ENCODE measurements at regions of chr11 and their contacts with region 1.

Region 1: DNA sequence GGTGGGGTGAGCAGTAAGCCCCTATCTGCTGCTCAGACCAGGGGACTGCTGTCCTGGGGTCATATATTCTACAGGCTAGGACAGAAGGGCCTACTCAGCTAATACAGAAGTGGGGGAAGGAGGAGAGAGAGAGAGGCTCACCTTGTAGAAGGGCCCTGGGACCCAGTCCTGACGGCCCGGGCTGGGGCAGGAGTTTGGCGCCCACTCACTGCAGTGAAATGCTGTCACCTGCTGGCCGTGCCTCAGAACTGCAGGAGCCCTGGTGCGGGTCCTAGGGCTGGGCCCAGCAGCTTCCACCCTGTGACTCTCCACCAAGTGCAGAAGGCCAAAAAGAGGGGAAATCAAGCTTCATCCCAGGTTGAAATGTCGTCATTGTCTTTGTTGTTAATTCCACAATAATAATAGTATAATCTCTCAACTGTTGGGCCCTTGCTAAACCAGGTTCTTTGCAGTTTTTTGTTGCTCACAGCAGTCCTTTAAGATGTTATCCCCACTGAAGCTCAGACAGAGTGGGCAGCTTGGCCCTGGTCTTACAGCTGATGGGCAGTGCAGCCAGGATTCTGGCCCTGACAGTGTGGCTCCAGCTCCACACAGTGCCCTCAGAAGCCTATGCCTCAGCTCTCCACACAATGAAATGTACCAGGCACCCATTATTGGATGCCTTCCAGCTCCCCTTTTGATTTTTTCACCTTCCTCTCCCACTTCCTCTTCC is 29.6 kb downstream of the TRIM29 start:
- DNase-seq: peak; percentile 61 to 70
- H3K4me3 ChIP-seq: no peak overlapping the region
- H3K27ac ChIP-seq: no peak overlapping the region
- H3K4me1 ChIP-seq: no peaks in the 10 kb centered on the region
- H3K27me3 ChIP-seq: peaks cover 28% of the 10 kb centered on the region
- CTCF ChIP-seq: peak; percentile 100

Region 2: DNA sequence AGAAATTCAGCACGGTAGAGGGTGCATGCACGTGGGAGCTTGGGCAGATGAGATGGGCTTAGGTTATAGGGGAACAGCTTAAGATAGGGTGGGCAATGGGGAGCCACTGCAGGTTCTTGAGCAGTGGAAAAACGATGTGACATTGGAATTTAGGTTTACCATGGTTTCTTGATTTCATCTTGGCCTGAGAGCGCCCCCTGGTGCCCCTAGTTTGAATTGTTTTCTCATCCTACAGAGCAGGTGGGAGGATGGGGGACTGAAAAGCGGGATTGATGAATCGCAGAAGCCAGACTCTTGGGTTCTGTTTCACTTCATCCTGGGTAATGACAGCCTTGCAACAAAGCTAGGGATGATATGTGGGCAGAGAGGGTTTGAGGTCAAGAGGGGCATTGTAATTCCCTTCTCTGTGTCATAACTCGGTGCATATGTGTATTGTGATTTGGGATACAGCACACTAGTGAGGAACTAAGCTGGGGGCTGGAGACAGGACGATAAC is 784.7 kb before region 1 on chr11:
- CTCF ChIA-PET with region 1: no interaction called
- POLR2A ChIA-PET with region 1: no interaction called
- intact Hi-C with region 1: no loop called
- DNase-seq: peak; percentile 59 to 71
- H3K4me3 ChIP-seq: no peak overlapping the region
- H3K27ac ChIP-seq: no peak overlapping the region
- H3K4me1 ChIP-seq: peaks cover 22% of the 10 kb centered on the region
- H3K27me3 ChIP-seq: no peaks in the 10 kb centered on the region
- CTCF ChIP-seq: peak; percentile 96

Region 3: GRCh38 chr11:119666463-119667131 is 441.7 kb before region 1 on chr11:
- CTCF ChIA-PET with region 1: no interaction called
- POLR2A ChIA-PET with region 1: no interaction called
- intact Hi-C with region 1: loop called (anchors 1 kb)
- DNase-seq: peak; percentile 71 to 83
- H3K4me3 ChIP-seq: no peak overlapping the region
- H3K27ac ChIP-seq: no peak overlapping the region
- H3K4me1 ChIP-seq: no peaks in the 10 kb centered on the region
- H3K27me3 ChIP-seq: no peaks in the 10 kb centered on the region
- CTCF ChIP-seq: peak; percentile 98

Region 4: DNA sequence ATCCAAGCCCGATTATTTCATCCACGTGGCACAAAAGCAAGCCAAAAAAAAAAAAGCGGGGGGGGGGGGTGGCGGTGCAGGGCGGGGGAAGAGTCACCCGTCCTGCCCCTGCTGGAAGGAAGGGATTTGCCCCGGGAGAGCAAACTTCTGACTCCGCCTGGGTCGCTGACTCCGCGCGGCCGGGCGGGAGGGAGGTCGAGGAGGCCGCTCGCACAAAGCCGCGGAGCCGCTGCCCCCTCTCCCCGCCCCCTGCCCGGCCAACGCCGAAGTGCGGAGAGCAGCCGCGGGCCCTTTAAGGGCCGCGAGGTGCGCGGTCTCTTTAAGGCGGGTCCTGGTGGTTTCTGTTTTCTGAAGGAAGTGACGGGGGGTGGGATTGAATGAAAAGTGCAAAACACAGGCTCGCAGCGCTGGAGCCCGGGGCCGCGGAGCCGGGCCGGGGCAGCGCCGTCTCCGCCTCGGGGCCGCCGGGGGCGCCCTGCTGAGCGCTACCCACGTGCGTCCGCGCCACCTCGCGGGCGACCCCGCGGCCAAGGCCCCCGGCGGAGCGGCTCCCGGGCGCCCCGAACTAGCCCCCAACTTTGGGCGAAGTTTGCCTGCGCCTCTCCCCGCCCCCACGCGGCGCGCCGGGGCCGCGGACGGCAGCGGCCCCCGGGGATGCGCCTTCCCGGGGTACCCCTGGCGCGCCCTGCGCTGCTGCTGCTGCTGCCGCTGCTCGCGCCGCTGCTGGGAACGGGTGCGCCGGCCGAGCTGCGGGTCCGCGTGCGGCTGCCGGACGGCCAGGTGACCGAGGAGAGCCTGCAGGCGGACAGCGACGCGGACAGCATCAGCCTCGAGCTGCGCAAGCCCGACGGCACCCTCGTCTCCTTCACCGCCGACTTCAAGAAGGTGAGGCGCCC is 102.6 kb after region 1 on chr11 and contains the start of gene OAF:
- CTCF ChIA-PET with region 1: interaction called, 15 read pairs
- POLR2A ChIA-PET with region 1: no interaction called
- intact Hi-C with region 1: no loop called
- DNase-seq: peak; percentile 77 to 85
- H3K4me3 ChIP-seq: peak within 1 kb of the TSS; percentile 99
- H3K27ac ChIP-seq: peak within 1 kb of the TSS; percentile 80
- H3K4me1 ChIP-seq: peaks cover 65% of the 10 kb centered on the region
- H3K27me3 ChIP-seq: no peaks in the 10 kb centered on the region
- CTCF ChIP-seq: peak; percentile 43; the same call in 1 of the 2 replicates
- total RNA-seq, gene OAF: 45.6 and 66.1 TPM in 2 replicates

Region 5: DNA sequence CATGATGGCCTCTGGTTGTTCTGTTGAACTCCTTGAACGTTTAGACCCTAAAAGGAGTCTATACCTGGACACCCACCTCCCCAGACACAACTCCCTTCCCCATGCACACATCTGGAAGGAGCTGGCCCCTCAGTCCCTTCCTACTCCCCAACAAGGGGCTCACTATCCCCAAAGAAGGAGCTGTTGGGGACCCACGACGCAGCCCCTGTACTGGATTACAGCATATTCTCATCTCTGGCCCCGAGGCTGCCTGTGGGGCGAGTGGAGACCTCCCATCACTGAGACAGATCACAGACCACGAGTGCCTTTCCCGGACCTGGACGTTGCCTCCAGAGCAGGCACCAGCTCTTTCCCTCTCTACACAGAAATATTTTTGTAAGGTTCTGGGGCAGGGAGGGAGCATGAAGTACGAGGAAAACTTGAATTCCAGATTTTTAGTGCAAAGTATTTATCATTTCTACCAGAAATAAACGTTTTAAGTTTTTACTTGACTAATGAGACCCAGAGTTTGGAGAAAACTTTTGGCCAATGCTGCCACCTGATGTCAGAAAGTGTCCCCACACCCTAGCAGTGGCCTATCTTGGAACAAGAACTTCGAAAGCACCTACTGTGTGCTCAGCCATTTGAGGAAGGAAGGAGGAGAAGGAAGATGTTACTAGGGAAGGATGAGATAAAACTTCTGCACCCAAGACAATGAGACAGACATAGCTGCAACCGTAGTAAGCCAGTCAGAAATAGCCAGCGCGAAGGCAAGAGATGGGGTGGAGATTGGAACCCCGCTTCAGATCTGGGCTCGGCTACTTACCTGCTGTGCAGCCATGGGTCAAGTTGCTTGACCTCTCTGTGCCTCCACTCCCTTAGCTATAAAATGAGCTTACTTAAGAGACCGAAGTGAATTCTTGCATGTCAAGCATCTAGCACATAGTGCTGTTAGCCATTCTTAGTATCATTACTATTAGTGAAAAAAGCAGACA is 121.4 kb after region 1 on chr11:
- CTCF ChIA-PET with region 1: no interaction called
- POLR2A ChIA-PET with region 1: no interaction called
- intact Hi-C with region 1: loop called (anchors 5 kb)
- DNase-seq: no peak
- H3K4me3 ChIP-seq: no peak overlapping the region
- H3K27ac ChIP-seq: no peak overlapping the region
- H3K4me1 ChIP-seq: no peaks in the 10 kb centered on the region
- H3K27me3 ChIP-seq: no peaks in the 10 kb centered on the region
- CTCF ChIP-seq: peak; percentile 89